ENCODE measurements at regions of chr1 and their contacts with region 1.

Region 1: DNA sequence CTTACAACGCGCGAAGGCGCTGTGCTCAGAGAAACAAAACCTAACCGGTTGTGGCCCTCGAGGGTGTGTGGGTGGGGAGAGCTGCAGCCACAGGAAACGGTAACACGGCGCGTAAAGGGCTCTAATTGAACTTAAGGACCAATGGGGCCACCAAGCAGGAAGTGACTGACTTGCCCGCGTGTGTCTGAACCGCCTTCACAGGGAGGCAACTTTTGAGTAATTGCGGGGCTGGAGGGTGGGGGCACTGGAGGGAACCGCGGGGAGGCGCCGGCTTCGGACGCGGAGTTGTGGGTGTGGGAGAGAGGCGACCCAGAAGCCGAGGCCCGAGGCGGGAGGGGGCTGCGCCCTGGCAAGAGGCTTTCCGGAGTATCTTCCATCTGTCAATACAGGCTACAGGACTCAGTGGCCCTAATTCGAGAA is 577 bp upstream of the PNRC2 start:
- DNase-seq: peak; percentile 93
- H3K4me3 Mint-ChIP-seq: peak overlapping the region; percentile 99
- H3K27ac Mint-ChIP-seq: peak overlapping the region; percentile 100
- H3K4me1 Mint-ChIP-seq: peaks cover 54% of the 10 kb centered on the region
- H3K27me3 Mint-ChIP-seq: no peaks in the 10 kb centered on the region

Region 2: DNA sequence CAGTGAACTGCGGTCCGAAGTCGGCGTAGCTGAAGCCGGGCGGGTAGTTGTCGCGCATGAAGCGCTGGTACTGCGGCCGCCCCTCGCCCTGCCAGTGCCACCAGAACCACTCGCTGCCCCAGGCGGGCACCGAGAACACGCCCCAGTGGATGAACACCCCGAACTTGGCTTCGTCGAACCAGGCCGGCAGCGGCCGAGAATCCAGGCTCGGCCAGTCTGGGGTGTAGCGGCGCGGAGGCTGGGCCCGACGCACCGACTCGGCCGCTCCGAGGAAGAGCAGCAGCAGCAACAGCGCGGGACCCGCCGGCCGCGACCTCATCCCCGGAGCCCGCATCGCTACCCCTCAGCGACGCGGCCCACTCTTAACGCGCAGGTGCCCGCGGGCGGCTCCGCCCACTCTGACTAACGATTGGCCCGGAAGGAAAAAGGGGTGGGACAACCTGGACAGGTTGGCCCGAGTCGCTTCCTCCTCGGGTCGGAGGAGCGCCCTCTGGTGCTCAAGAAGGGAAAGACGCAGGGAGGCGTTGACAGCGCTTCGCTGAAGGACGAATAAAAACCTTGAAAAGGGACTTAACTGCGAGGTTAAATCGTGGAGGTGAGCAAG is 91.0 kb before region 1 on chr1 and contains the start of gene FUCA1:
- intact Hi-C with region 1: loop called (anchors 5 kb)
- DNase-seq: peak; percentile 91
- H3K4me3 Mint-ChIP-seq: peak within 1 kb of the TSS; percentile 86
- H3K27ac Mint-ChIP-seq: peak within 1 kb of the TSS; percentile 49
- H3K4me1 Mint-ChIP-seq: peaks cover 16% of the 10 kb centered on the region
- H3K27me3 Mint-ChIP-seq: peaks cover 16% of the 10 kb centered on the region
- total RNA-seq, gene FUCA1: 3.3 and 4.0 TPM in 2 replicates

Region 3: DNA sequence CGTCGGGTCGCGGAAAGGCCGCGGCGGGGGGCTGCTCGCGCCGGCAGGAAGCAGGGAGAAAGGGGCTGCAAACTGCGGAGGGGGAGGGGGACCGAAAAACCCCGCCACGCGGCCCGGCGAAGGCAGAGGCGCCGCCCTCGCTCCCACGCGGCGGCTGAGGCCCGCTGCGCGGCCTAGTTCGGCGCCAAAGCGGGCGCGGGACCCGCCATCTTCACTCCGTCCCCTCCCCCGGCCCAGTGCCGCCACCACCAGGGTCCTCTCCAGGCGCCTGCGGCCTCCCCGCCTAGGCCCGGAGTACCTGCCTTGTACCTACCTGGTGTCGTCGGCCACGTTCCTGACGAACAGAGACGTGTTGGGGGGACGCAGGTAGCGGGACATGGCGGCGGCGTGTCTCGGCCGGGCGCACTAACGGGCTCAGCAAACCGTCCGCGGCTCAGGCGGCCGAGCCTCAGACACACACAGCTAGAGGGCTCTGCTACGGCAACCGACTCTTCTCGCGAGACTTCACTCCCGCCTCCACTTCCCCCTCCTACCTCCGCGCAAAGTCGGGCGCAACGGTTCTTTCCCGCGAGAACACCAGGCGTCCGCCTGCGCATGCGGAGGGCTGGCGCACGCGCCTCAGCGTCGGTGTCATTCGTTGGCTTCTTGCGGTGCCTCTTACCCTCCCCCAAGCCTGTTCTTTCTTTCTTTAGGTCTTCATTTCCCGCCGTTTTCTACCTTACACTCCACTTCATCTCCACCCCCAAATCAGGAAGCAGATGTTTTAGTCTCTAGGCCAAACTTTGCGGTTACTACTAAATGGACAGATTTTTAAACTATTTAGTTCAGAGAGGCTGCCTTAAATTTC is 21.1 kb after region 1 on chr1 and contains the start of gene SRSF10:
- intact Hi-C with region 1: loop called (anchors 1 kb)
- DNase-seq: peak; percentile 99
- H3K4me3 Mint-ChIP-seq: peak within 1 kb of the TSS; percentile 95
- H3K27ac Mint-ChIP-seq: peak within 1 kb of the TSS; percentile 98
- H3K4me1 Mint-ChIP-seq: peaks cover 36% of the 10 kb centered on the region
- H3K27me3 Mint-ChIP-seq: no peaks in the 10 kb centered on the region
- total RNA-seq, gene SRSF10: 213 and 217 TPM in 2 replicates

Measured in activated T-helper 2 cell treated with anti-CD3 and anti-CD28 coated beads, Interferon-gamma antibody, Interleukin-2, Interleukin-4, amounts not matched to agents 10 μg/mL and 5 μg/mL and 100 μg/mL, durations not matched to agents 14 hours and 24 hours and 36 hours (primary cell).